PC-9 (cell line): ENCODE measurements at regions of chr3 and their contacts with region 1.

Region 1: GRCh38 chr3:95254771-95255170 is 1191.9 kb downstream of the NSUN3 start:
- DNase-seq: no peak
- H3K4me3 ChIP-seq: no peak overlapping the region
- H3K27ac ChIP-seq: no peak overlapping the region
- H3K4me1 ChIP-seq: no peaks in the 10 kb centered on the region
- H3K27me3 ChIP-seq: no peaks in the 10 kb centered on the region
- CTCF ChIP-seq: no peak

Region 2: DNA sequence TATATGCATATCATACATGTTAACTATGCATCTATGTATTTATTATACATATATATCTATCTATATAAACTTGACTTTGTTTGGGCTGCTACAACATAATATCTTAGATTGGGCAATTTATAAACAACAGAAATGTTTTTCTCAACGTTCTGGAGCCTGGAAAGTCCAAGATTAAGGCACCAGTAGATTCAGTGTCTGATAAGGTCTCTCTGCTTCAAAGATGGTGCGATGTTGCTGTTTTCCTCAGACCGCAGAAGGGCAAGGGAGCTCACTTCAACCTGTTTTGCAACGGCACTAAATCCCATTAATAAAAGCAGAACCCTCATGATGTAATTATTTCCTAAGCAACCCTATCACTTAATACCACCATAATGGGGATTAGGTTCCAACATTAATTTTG is 57.2 kb before region 1 on chr3:
- CTCF ChIA-PET with region 1: no interaction called
- POLR2A ChIA-PET with region 1: no interaction called
- intact Hi-C with region 1: loop called (anchors 10 kb)
- DNase-seq: no peak
- H3K4me3 ChIP-seq: no peak overlapping the region
- H3K27ac ChIP-seq: no peak overlapping the region
- H3K4me1 ChIP-seq: no peaks in the 10 kb centered on the region
- H3K27me3 ChIP-seq: no peaks in the 10 kb centered on the region
- CTCF ChIP-seq: no peak

Region 3: DNA sequence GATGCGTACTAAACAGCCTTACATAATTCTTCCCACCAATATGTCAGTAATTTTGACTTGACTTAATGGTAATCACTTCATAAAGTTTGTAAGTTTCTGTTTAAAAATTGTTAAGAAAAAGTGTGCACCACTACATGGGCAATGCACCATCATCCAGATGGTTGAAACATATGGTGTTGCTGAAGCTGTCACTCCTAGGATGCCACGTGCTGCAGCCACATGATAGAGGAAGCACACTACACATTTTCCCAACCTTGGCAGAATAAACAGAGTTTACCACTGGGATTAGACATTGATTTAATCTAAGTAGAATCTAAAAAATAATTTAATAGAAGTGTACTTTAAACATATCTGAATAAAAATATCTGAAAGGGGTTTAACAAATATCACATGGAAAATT is 18.0 kb after region 1 on chr3:
- CTCF ChIA-PET with region 1: no interaction called
- POLR2A ChIA-PET with region 1: no interaction called
- intact Hi-C with region 1: no loop called
- DNase-seq: no peak
- H3K4me3 ChIP-seq: no peak overlapping the region
- H3K27ac ChIP-seq: no peak overlapping the region
- H3K4me1 ChIP-seq: no peaks in the 10 kb centered on the region
- H3K27me3 ChIP-seq: no peaks in the 10 kb centered on the region
- CTCF ChIP-seq: no peak